Endothelial cell of umbilical vein (primary cell): ENCODE measurements at regions of chr1 and their contacts with region 1.

Region 1: DNA sequence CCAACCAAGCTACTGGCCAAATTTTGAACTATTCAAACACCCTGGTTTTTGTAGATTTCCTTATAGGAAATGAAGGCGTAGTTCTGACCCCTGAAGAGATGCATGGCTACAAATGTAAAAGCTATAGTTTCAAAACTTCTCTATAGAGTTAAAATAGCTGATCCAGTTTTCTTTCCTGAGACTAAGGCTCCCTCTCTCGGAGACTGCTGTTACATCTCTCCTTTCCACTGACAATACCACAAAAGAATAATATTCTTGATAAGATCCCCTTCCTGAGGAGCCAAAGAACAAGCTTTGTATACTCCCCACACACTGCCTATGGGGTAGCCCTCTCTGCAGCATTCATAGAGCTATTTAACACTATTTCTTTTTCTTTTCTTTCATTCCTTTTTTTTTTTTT is 6.7 kb upstream of the CFAP126 start:
- DNase-seq: peak; percentile 49
- H3K4me3 ChIP-seq: no peak overlapping the region
- H3K27ac ChIP-seq: no peak overlapping the region
- H3K4me1 ChIP-seq: no peaks in the 10 kb centered on the region
- H3K27me3 ChIP-seq: no peaks in the 10 kb centered on the region
- CTCF ChIP-seq: peak; percentile 14 to 48
- POLR2A ChIP-seq: no peak

Region 2: GRCh38 chr1:160070243-160071163 is 1303.9 kb before region 1 on chr1:
- CTCF ChIA-PET with region 1: no interaction called
- POLR2A ChIA-PET with region 1: no interaction called
- dilution Hi-C with region 1: no loop called
- intact Hi-C with region 1: no loop called
- DNase-seq: peak; percentile 74
- H3K4me3 ChIP-seq: peak overlapping the region; percentile 31 to 69 (median 45)
- H3K27ac ChIP-seq: no peak overlapping the region
- H3K4me1 ChIP-seq: peaks cover 7% of the 10 kb centered on the region
- H3K27me3 ChIP-seq: peaks cover 25 to 28% of the 10 kb centered on the region in 2 experiments
- CTCF ChIP-seq: no peak
- POLR2A ChIP-seq: no peak

Region 3: GRCh38 chr1:161192476-161193465 is 181.6 kb before region 1 on chr1:
- CTCF ChIA-PET with region 1: interaction called, 15 read pairs
- POLR2A ChIA-PET with region 1: interaction called, 6 read pairs
- dilution Hi-C with region 1: no loop called
- intact Hi-C with region 1: no loop called
- DNase-seq: peak; percentile 68
- H3K4me3 ChIP-seq: no peak overlapping the region
- H3K27ac ChIP-seq: no peak overlapping the region
- H3K4me1 ChIP-seq: peaks cover 21% of the 10 kb centered on the region
- H3K27me3 ChIP-seq: no peaks in the 10 kb centered on the region
- CTCF ChIP-seq: peak; percentile 93
- POLR2A ChIP-seq: no peak

Region 4: GRCh38 chr1:161201828-161202725 is 172.3 kb before region 1 on chr1 and contains the start of gene NDUFS2:
- CTCF ChIA-PET with region 1: interaction called, 11 read pairs
- POLR2A ChIA-PET with region 1: no interaction called
- dilution Hi-C with region 1: no loop called
- intact Hi-C with region 1: no loop called
- DNase-seq: peak; percentile 98
- H3K4me3 ChIP-seq: peak within 1 kb of the TSS; percentile 72 to 96 (median 75)
- H3K27ac ChIP-seq: peak within 1 kb of the TSS; percentile 98
- H3K4me1 ChIP-seq: peaks cover 59% of the 10 kb centered on the region
- H3K27me3 ChIP-seq: no peaks in the 10 kb centered on the region
- CTCF ChIP-seq: peak in 1 of 2 donors; percentile 9
- POLR2A ChIP-seq: peak; percentile 93
- total RNA-seq, gene NDUFS2: 95.1 and 99.7 TPM in 2 replicates

Region 5: GRCh38 chr1:161209790-161210409 is 164.5 kb before region 1 on chr1:
- CTCF ChIA-PET with region 1: interaction called, 12 read pairs
- POLR2A ChIA-PET with region 1: no interaction called
- dilution Hi-C with region 1: no loop called
- intact Hi-C with region 1: no loop called
- DNase-seq: peak; percentile 62
- H3K4me3 ChIP-seq: no peak overlapping the region
- H3K27ac ChIP-seq: no peak overlapping the region
- H3K4me1 ChIP-seq: peaks cover 10% of the 10 kb centered on the region
- H3K27me3 ChIP-seq: no peaks in the 10 kb centered on the region
- CTCF ChIP-seq: peak; percentile 89 to 91
- POLR2A ChIP-seq: no peak

Region 6: DNA sequence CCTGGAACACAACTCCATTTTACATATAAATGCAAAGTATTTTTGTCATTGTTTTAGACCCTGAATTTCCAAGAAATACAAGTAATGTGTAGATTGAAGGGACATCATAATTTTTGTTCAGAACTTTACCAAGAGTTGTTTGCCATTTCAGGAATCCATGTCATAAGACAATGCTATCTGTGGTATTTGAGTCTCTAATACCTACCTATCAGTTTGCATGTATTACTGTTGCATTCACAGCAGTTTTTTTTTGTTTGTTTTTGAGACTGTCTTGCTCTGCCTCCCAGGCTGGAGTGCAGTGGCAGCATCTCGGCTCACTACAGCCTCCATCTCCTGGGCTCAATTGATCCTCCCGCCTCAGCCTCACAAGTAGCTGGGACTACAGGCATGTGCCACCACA is 81.7 kb before region 1 on chr1:
- CTCF ChIA-PET with region 1: interaction called, 10 read pairs
- POLR2A ChIA-PET with region 1: no interaction called
- dilution Hi-C with region 1: no loop called
- intact Hi-C with region 1: no loop called
- DNase-seq: no peak
- H3K4me3 ChIP-seq: no peak overlapping the region
- H3K27ac ChIP-seq: no peak overlapping the region
- H3K4me1 ChIP-seq: no peaks in the 10 kb centered on the region
- H3K27me3 ChIP-seq: peaks cover 5 to 8% of the 10 kb centered on the region in 2 experiments
- CTCF ChIP-seq: no peak
- POLR2A ChIP-seq: no peak

Region 7: GRCh38 chr1:161404051-161404597 is 29.8 kb after region 1 on chr1:
- CTCF ChIA-PET with region 1: no interaction called
- POLR2A ChIA-PET with region 1: no interaction called
- dilution Hi-C with region 1: no loop called
- intact Hi-C with region 1: no loop called
- DNase-seq: no peak
- H3K4me3 ChIP-seq: no peak overlapping the region
- H3K27ac ChIP-seq: no peak overlapping the region
- H3K4me1 ChIP-seq: peaks cover 5% of the 10 kb centered on the region
- H3K27me3 ChIP-seq: peaks cover 0 to 2% of the 10 kb centered on the region in 2 experiments
- CTCF ChIP-seq: no peak
- POLR2A ChIP-seq: no peak